BJ (cell line): ENCODE measurements at regions of chr15 and their contacts with region 1.

Region 1: GRCh38 chr15:73991726-73992593 is at the start of gene STOML1:
- DNase-seq: no peak
- H3K4me3 ChIP-seq: peak within 1 kb of the TSS; percentile 61
- H3K27me3 ChIP-seq: no peaks in the 10 kb centered on the region
- CTCF ChIP-seq: peak; percentile 76
- polyA plus RNA-seq, gene STOML1: 13.2 and 18.3 TPM in 2 replicates

Region 2: DNA sequence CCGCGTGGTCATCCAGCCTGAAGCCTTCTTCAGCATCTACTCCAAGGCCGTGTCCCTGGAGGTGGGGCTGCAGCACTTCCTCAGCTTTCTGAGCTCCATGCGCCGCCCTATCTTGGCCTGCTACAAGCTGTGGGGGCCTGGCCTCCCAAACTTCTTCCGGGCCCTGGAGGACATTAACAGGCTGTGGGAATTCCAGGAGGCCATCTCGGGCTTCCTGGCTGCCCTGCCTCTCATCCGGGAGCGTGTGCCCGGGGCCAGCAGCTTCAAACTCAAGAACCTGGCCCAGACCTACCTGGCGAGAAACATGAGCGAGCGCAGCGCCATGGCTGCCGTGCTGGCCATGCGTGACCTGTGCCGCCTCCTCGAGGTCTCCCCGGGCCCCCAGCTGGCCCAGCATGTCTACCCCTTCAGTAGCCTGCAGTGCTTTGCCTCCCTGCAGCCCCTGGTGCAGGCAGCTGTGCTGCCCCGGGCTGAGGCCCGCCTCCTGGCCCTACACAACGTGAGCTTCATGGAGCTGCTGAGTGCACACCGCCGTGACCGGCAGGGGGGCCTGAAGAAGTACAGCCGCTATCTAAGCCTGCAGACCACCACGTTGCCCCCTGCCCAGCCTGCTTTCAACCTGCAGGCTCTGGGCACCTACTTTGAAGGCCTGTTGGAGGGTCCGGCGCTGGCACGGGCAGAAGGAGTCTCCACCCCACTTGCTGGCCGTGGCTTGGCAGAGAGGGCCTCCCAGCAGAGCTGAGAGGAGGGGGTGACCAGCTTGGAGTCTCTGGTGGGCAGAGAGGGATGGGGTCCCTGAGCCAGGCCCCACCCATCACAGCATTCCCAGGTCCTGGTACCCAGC is 52.5 kb after region 1 on chr15:
- CTCF ChIA-PET with region 1: interaction called, 48 read pairs
- POLR2A ChIA-PET with region 1: no interaction called
- DNase-seq: no peak
- H3K4me3 ChIP-seq: no peak overlapping the region
- H3K27me3 ChIP-seq: no peaks in the 10 kb centered on the region
- CTCF ChIP-seq: no peak

Region 3: DNA sequence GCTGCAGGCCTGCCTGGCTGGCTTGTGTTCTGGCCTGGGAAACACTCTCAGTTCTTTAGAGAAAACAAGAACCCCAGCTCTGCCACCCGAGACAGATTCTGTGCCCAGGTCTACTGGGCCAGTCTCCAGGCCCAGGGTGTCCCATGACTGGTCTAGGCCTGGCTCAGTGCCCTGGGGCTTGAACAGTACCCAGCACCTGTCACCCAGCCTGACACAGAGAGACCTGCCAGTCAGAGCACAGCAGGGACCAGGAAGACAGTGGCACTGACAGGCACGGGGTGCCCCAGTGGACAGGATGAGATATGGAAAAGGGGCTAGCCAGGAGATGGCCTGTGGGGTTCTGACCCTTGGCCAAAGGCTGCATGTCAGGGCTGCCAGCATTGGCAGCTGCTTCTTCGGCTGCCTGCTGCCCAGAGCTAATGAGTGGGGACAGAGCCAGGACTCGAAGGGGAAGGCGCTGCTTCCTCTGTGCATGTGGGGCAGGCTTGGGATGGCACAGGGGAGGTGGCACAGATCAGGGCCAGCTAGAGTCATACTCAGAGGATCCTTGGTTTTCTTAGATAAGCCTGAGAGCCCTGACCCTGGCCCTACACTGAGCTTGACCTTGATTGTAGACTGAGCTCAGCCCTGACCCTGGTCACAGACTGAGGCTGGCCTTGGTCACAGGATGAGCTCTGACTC is 259.3 kb after region 1 on chr15:
- CTCF ChIA-PET with region 1: no interaction called
- POLR2A ChIA-PET with region 1: no interaction called
- DNase-seq: no peak
- H3K4me3 ChIP-seq: no peak overlapping the region
- H3K27me3 ChIP-seq: peaks cover 6% of the 10 kb centered on the region; the same call in 1 of the 2 replicates
- CTCF ChIP-seq: no peak

Region 4: GRCh38 chr15:74340139-74340538 is 348.2 kb after region 1 on chr15:
- CTCF ChIA-PET with region 1: no interaction called
- POLR2A ChIA-PET with region 1: no interaction called
- DNase-seq: peak; percentile 15
- H3K4me3 ChIP-seq: no peak overlapping the region
- H3K27me3 ChIP-seq: no peaks in the 10 kb centered on the region
- CTCF ChIP-seq: no peak